Activated CD4-positive, alpha-beta T cell treated with anti-CD3 and anti-CD28 coated beads, Interleukin-2, amount 10 ng/mL, durations not matched to agents 24 days and 14 days (primary cell): ENCODE measurements at regions of chr2 and their contacts with region 1.

Region 1: DNA sequence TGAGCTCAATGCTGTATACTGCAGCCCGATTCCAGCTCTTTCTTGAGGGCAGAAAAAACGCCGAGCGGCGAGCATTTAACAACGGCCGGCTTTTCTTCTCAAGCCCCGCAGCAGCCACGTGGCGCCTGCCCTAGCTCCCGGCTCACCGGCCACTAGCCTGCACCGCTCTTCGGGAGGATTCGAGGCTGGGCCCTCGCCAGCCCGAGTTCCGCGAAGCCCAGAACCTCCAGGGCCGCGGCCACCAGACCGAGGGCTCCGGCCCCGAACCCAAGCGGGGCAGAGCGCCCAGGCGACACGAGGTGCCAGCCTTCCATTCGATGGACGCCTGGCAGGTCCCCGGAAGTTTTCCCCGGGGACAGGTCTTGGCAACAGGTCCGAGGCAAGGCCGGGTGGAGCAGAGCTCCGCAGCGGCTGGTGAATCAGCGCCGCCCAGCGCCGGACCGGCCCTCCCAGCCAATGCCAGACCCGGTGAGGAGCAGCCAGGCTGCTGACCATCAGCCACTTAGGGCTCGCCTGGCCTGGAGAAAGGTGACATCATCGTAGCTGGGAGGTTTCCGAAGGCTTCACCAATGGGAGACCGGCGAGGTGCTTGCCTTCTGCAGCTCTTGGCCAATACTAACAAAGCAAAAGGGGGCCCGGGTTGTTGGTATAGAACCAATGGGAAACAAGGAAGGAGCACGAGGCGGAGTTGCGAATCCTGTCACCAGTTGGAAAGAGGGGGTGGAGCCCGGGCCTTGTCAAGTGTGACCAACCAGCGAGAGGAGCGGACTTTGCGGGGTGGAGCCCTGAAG is 544 bp upstream of the MXD1 start:
- DNase-seq: peak; percentile 100
- H3K4me3 Mint-ChIP-seq: peak overlapping the region; percentile 86
- H3K27ac Mint-ChIP-seq: peak overlapping the region; percentile 93
- H3K4me1 Mint-ChIP-seq: peaks cover 29% of the 10 kb centered on the region
- H3K27me3 Mint-ChIP-seq: no peaks in the 10 kb centered on the region

Region 2: DNA sequence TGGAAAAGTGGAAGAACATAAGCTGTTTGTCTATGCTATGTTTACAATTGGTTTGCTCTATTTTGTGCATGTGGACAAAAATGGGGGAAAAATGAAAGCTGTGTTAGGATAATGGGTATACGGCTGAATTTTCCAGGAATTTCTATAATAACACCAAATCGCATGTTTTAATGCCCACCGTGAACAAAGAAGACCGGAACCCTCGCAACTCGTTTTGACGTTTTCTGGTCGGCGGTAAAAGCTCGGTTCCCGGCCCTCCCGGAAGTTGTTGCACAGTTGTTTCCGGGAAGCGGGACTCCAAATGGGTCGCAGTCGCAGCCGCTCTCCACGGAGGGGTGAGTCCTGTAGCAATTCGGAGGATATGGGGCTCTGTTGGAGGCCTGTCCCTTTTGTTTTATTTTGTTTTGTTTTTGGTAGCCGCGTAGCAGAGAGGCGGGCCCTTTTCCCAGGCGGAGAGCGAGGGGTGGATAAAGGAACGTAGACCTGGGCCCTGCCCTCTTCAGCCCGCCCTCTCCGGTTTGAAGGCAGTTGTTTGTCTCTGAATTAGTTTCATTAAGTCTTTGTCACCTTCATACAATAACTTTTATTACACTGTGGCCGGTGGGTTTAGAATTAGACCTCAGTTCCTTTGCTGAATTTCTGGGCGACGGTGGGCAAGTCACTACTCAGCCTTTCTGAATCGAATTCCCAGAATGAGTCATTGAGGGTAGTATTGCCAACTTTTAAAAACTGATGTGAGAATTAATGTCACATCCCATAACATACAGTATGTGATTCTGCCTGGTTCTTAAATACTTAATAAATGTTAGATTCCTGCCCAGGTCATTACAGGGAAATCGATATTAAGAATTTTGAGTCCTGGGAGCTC is 20.4 kb before region 1 on chr2 and contains the start of gene SNRNP27:
- intact Hi-C with region 1: loop called (anchors 2 kb)
- DNase-seq: peak; percentile 93
- H3K4me3 Mint-ChIP-seq: peak within 1 kb of the TSS; percentile 99
- H3K27ac Mint-ChIP-seq: peak within 1 kb of the TSS; percentile 97
- H3K4me1 Mint-ChIP-seq: peaks cover 28% of the 10 kb centered on the region
- H3K27me3 Mint-ChIP-seq: no peaks in the 10 kb centered on the region
- total RNA-seq, gene SNRNP27: 61.1 and 63.3 TPM in 2 replicates

Region 3: DNA sequence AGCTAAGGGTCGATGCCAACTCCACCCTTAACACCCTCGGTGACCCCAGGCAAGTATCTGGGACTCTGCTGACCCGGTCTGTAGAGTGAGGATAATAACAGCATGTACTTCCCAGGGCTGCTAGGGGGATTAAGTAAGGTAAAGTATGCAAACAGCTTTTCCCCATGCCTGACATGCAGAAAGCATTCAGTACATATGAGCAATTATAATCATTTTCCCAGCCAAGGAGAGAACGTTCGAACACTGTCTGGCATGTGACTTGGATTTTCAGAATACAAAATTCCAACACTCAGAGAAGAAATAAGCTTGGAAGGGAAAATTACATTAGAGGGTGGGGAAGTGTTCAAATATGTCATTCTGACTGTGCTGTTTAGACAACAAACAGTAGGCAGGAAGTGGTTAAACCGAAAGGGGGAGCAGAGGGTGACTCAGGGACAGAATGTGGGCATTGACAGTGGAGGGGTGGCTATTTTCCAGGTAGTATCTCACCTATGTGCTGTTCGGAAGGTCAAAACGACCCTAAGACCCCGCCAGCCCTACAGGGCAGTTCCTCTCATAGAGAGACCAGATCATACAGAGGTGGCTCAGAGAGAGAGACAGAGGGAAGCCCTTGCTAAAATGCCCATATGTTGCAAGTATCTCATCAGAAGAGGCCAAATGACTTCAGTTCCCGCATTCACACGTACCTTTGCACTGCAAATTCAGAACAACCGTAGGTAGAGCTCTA is 32.1 kb after region 1 on chr2:
- intact Hi-C with region 1: loop called (anchors 2 kb)
- DNase-seq: peak; percentile 92
- H3K4me3 Mint-ChIP-seq: peak overlapping the region; percentile 56
- H3K27ac Mint-ChIP-seq: peak overlapping the region; percentile 90
- H3K4me1 Mint-ChIP-seq: peaks cover 40% of the 10 kb centered on the region
- H3K27me3 Mint-ChIP-seq: no peaks in the 10 kb centered on the region

Region 4: GRCh38 chr2:70069049-70069448 is 154.7 kb after region 1 on chr2:
- intact Hi-C with region 1: loop called (anchors 1 kb)
- DNase-seq: peak; percentile 94
- H3K4me3 Mint-ChIP-seq: peak overlapping the region; percentile 47
- H3K27ac Mint-ChIP-seq: peak overlapping the region; percentile 91
- H3K4me1 Mint-ChIP-seq: peaks cover 43% of the 10 kb centered on the region
- H3K27me3 Mint-ChIP-seq: no peaks in the 10 kb centered on the region

Region 5: DNA sequence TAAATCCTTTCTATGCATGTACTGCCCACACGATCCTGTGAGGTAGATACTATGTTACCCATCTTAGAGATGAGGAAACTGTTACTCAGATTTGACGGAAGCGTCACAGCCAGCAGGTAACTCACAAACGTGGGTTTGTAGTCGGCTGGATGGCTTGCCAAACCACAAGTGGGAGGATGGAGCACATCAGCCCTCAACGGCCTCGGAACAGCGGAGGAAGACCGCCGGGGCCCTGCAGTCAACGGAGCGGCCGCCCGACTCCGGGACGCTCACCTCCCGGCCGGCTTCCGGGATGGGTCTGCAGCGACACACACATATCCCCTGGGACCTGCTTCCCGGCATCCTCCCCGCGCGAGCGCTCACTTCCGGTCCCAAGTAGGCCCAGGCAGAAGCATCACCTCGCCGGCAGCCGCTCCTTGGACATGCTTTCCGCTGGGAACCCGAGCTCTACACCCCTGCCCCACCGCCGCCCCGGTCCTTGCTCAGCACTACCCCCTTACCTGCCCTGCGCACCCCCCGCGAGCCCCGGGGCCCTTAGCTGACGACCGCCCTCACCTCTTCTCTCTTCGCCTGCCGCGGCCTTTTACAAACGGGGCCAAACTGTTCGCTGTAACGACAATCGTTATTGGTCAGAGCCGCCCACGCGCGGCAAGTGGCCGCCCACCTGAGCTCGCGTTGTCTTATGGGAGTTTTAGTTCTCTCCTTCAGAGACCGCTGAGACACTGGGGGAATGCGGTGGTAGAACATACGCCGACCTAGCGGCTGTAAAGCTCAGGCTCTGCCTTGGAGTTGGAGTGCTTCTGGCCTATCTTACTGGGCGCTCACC is 276.3 kb after region 1 on chr2 and contains the start of gene C2orf42:
- intact Hi-C with region 1: loop called (anchors 1 kb)
- DNase-seq: peak; percentile 98
- H3K4me3 Mint-ChIP-seq: peak within 1 kb of the TSS; percentile 92
- H3K27ac Mint-ChIP-seq: peak within 1 kb of the TSS; percentile 100
- H3K4me1 Mint-ChIP-seq: peaks cover 21% of the 10 kb centered on the region
- H3K27me3 Mint-ChIP-seq: peaks cover 2% of the 10 kb centered on the region
- total RNA-seq, gene C2orf42: 18.5 and 19.6 TPM in 2 replicates

Region 6: DNA sequence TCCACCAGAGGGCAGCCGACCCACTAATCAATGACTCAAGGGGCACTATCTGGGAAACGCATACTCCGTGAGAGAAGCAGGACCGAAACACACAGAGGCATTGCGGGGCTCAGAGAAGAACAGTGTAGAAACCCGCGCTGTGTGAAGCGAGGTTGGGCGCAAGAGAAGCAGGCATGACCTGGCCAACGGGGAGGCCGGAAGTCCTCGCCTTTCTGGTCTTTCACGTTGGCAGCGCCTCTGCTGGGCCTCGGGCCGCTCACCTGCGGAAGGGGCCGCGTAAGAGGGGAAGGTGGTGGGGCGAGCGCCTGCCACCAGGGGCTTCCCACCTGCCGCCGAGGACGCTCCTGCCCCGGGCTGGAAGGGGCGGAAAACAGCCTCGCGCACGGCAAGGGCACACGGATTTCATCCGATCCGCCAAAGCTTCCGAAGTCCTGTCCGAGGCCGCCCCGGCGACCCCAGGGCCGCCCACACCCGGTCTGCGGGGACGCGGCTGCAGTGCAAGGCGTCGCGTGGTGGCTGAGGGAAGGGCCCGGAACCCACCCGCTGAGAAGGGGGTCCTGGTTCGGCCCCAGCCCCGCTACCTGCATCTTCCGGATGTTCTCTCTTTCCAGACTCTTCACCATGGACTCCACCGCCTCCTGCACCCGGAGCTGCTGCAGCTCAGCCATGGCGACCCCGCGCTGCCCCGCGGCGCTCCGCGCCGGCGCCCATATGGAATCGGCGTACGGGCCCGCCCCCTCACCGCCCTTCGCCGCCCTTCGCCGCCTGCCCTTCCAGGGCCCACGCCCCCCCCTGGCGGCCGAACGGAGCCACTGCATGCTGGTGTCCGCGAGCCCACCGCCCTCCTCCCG is 387.2 kb after region 1 on chr2 and contains the start of gene FAM136A:
- intact Hi-C with region 1: loop called (anchors 2 kb)
- DNase-seq: peak; percentile 97
- H3K4me3 Mint-ChIP-seq: peak within 1 kb of the TSS; percentile 91
- H3K27ac Mint-ChIP-seq: peak within 1 kb of the TSS; percentile 93
- H3K4me1 Mint-ChIP-seq: peaks cover 39% of the 10 kb centered on the region
- H3K27me3 Mint-ChIP-seq: no peaks in the 10 kb centered on the region
- total RNA-seq, gene FAM136A: 85.5 and 89.7 TPM in 2 replicates